ENCODE measurements at regions of chr11 and their contacts with region 1.

Region 1: DNA sequence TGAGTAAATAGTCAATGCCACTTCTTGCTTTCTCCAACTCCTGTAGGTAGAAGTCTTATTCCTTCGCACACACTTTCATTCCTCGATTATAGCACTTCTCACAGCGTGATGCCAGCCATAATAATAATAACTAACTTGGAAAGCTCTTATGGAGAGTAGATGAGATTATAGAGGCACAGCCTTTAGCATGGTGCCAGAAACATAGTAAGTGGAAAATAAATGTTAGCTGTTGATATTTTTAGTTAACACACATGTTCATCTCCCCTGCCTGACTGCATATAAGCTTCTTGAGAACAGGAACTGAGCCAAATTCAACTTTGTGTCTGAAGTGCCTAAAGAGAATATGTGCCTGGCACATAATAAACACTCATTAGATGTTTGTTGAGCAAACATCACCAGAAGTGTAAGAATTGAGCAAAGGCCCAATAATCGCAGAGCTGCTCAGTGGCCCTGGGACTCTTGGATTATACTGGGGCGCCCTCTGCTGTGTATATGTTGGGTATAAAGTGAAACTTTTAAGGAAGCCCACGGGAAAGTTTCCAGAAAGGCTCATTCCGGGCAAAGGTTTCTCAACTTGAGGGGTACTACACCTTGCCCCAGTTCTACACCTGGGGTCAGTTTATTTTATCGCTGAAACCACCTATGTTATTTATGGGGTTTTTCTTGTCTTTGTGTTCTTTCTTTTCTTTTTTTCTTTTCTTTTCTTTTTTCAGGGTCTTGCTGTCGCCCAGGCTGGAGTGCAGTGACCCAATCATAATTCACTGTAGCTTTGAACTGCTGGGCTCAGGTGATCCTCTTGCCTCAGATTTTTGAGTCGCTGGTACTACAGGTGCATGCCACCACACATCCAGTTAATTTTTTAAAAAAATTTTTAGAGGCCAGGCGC is 22.3 kb downstream of the SLN start:
- DNase-seq: peak; percentile 72
- H3K4me3 Mint-ChIP-seq: no peak overlapping the region
- H3K27ac Mint-ChIP-seq: no peak overlapping the region
- H3K4me1 Mint-ChIP-seq: no peaks in the 10 kb centered on the region
- H3K27me3 Mint-ChIP-seq: peaks cover 6% of the 10 kb centered on the region

Region 2: GRCh38 chr11:107549253-107549953 is 140.2 kb before region 1 on chr11:
- CTCF ChIA-PET with region 1: interaction called, 51 read pairs
- DNase-seq: peak; percentile 40
- H3K4me3 Mint-ChIP-seq: no peak overlapping the region
- H3K27ac Mint-ChIP-seq: no peak overlapping the region
- H3K4me1 Mint-ChIP-seq: no peaks in the 10 kb centered on the region
- H3K27me3 Mint-ChIP-seq: no peaks in the 10 kb centered on the region

Region 3: GRCh38 chr11:107565219-107565937 is 124.2 kb before region 1 on chr11 and contains the start of gene ALKBH8:
- CTCF ChIA-PET with region 1: interaction called, 55 read pairs
- DNase-seq: peak; percentile 87
- H3K4me3 Mint-ChIP-seq: peak within 1 kb of the TSS; percentile 93
- H3K27ac Mint-ChIP-seq: peak within 1 kb of the TSS; percentile 92
- H3K4me1 Mint-ChIP-seq: peaks cover 44% of the 10 kb centered on the region
- H3K27me3 Mint-ChIP-seq: no peaks in the 10 kb centered on the region

Region 4: DNA sequence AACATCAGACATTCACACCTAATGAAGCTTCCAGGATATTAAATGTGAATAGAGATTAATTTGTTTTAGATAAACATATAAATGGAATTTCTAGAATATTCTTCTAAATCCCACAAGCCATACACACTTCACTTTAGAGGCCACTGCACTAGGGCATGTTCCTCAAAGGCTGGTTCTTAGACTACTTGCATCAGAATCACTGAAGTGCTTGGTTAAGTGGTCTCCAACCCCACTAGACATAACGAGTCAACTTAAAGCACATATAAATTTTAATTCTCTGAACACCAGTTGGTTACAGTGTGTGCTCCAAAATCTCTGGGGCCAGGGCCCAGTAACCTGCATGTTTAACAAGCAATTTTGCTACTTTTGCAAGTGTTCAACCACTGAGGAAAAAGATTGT is 116.1 kb before region 1 on chr11:
- CTCF ChIA-PET with region 1: interaction called, 29 read pairs
- DNase-seq: no peak
- H3K4me3 Mint-ChIP-seq: no peak overlapping the region
- H3K27ac Mint-ChIP-seq: no peak overlapping the region
- H3K4me1 Mint-ChIP-seq: no peaks in the 10 kb centered on the region
- H3K27me3 Mint-ChIP-seq: no peaks in the 10 kb centered on the region

Region 5: GRCh38 chr11:107590460-107591377 is 98.8 kb before region 1 on chr11 and contains the start of gene ELMOD1:
- CTCF ChIA-PET with region 1: interaction called, 10 read pairs
- DNase-seq: peak; percentile 56
- H3K4me3 Mint-ChIP-seq: peak within 1 kb of the TSS; percentile 71
- H3K27ac Mint-ChIP-seq: peak within 1 kb of the TSS; percentile 11
- H3K4me1 Mint-ChIP-seq: peaks cover 18% of the 10 kb centered on the region
- H3K27me3 Mint-ChIP-seq: peaks cover 69% of the 10 kb centered on the region

Region 6: GRCh38 chr11:107719557-107720302 is 30.2 kb after region 1 on chr11:
- CTCF ChIA-PET with region 1: no interaction called
- DNase-seq: no peak
- H3K4me3 Mint-ChIP-seq: no peak overlapping the region
- H3K27ac Mint-ChIP-seq: no peak overlapping the region
- H3K4me1 Mint-ChIP-seq: no peaks in the 10 kb centered on the region
- H3K27me3 Mint-ChIP-seq: peaks cover 19% of the 10 kb centered on the region

Region 7: GRCh38 chr11:108393046-108393445 is 703.5 kb after region 1 on chr11:
- CTCF ChIA-PET with region 1: no interaction called
- DNase-seq: no peak
- H3K4me3 Mint-ChIP-seq: no peak overlapping the region
- H3K27ac Mint-ChIP-seq: no peak overlapping the region
- H3K4me1 Mint-ChIP-seq: no peaks in the 10 kb centered on the region
- H3K27me3 Mint-ChIP-seq: no peaks in the 10 kb centered on the region